ENCODE measurements at regions of chr2 and their contacts with region 1.

Region 1: GRCh38 chr2:209334198-209335017 is 89.4 kb upstream of the MAP2 start:
- DNase-seq: peak; percentile 84
- H3K4me3 Mint-ChIP-seq: no peak overlapping the region
- H3K27ac Mint-ChIP-seq: no peak overlapping the region
- H3K4me1 Mint-ChIP-seq: no peaks in the 10 kb centered on the region
- H3K27me3 Mint-ChIP-seq: no peaks in the 10 kb centered on the region
- CTCF ChIP-seq: peak; percentile 94

Region 2: GRCh38 chr2:208466151-208466919 is 868.1 kb before region 1 on chr2:
- CTCF ChIA-PET with region 1: interaction called, 4 read pairs
- POLR2A ChIA-PET with region 1: no interaction called
- intact Hi-C with region 1: loop called (anchors 1 kb)
- DNase-seq: peak; percentile 68
- H3K4me3 Mint-ChIP-seq: no peak overlapping the region
- H3K27ac Mint-ChIP-seq: no peak overlapping the region
- H3K4me1 Mint-ChIP-seq: no peaks in the 10 kb centered on the region
- H3K27me3 Mint-ChIP-seq: peaks cover 21% of the 10 kb centered on the region
- CTCF ChIP-seq: peak; percentile 75

Region 3: DNA sequence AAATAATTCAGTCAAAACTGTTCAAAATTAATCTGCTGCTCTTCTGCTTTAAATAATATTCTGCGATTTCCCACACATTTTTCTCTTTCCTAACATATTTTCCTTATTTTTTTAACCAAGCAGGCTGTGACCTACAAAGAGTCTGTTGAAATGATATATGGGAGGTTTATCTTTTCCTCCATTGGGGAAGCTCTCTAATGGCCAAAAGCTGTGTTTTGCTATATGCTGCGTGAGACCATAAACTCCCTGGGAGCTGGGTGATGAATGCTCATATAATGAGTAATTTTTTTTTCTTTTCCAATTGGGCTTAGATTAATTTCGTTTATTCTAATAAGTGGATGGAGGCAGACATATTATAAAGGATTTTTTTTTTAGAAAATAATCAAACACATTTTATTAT is 17.2 kb after region 1 on chr2:
- CTCF ChIA-PET with region 1: interaction called, 25 read pairs
- POLR2A ChIA-PET with region 1: no interaction called
- intact Hi-C with region 1: no loop called
- DNase-seq: no peak
- H3K4me3 Mint-ChIP-seq: no peak overlapping the region
- H3K27ac Mint-ChIP-seq: no peak overlapping the region
- H3K4me1 Mint-ChIP-seq: no peaks in the 10 kb centered on the region
- H3K27me3 Mint-ChIP-seq: no peaks in the 10 kb centered on the region
- CTCF ChIP-seq: no peak

Region 4: GRCh38 chr2:209391776-209392401 is 57.5 kb after region 1 on chr2:
- CTCF ChIA-PET with region 1: interaction called, 18 read pairs
- POLR2A ChIA-PET with region 1: no interaction called
- intact Hi-C with region 1: no loop called
- DNase-seq: peak; percentile 54
- H3K4me3 Mint-ChIP-seq: no peak overlapping the region
- H3K27ac Mint-ChIP-seq: peak overlapping the region; percentile 31
- H3K4me1 Mint-ChIP-seq: peaks cover 20% of the 10 kb centered on the region
- H3K27me3 Mint-ChIP-seq: no peaks in the 10 kb centered on the region
- CTCF ChIP-seq: no peak

Region 5: DNA sequence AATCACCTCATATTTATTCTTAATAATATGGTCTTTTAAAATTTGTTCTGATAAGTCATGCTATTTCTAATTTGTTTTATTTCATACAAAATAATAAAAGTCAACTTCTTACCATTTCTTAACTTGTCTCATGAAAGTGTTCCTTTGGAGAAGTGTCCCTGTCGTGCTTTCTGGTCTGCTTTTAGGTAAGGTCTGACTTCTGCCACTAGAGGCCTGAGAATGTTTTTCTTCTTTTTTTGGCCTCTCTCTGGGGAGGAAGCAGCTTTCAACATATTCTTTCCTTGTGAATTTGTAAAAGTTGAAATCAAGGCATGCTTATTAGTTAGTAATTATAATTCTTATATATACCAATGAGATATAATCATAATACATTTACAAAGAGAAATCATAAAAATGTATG is 128.8 kb after region 1 on chr2:
- CTCF ChIA-PET with region 1: no interaction called
- POLR2A ChIA-PET with region 1: no interaction called
- intact Hi-C with region 1: loop called (anchors 1 kb)
- DNase-seq: peak; percentile 10
- H3K4me3 Mint-ChIP-seq: no peak overlapping the region
- H3K27ac Mint-ChIP-seq: no peak overlapping the region
- H3K4me1 Mint-ChIP-seq: peaks cover 6% of the 10 kb centered on the region
- H3K27me3 Mint-ChIP-seq: no peaks in the 10 kb centered on the region
- CTCF ChIP-seq: no peak

Region 6: DNA sequence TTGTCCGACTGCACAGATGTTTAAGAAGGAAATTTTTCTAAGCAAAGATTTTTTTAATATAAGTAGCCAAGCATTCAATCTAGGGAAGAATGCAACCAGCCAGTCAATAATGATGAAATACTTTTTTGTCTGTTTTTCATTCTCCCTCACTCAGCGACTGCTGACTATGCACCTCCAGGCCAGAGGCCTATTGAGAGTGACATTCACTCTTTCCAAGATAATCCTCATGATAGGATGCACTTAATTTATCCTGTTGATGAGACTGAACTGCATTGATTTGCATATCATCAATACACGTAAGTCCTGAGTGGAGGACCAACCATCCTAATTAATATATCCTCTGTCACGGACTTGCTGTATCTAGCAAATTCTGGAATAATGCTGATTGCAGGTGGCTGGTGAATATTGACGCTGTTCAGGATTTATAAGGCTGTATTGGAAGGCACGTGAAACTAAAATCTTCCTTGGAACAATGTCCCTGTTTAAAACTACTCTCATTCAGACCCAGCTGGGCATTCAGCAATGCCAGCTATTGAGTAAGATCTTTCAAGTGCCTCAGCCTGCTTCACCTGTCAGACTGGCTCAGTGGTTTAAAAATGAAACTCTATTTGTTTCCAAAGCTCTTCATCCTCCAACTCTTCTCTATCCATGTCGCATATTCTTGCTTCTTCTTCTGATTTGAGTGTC is 231.6 kb after region 1 on chr2:
- CTCF ChIA-PET with region 1: interaction called, 18 read pairs
- POLR2A ChIA-PET with region 1: no interaction called
- intact Hi-C with region 1: no loop called
- DNase-seq: no peak
- H3K4me3 Mint-ChIP-seq: no peak overlapping the region
- H3K27ac Mint-ChIP-seq: no peak overlapping the region
- H3K4me1 Mint-ChIP-seq: no peaks in the 10 kb centered on the region
- H3K27me3 Mint-ChIP-seq: no peaks in the 10 kb centered on the region
- CTCF ChIP-seq: no peak

Region 7: GRCh38 chr2:210195101-210195852 is 860.9 kb after region 1 on chr2:
- CTCF ChIA-PET with region 1: interaction called, 10 read pairs
- POLR2A ChIA-PET with region 1: no interaction called
- intact Hi-C with region 1: loop called (anchors 10 kb)
- DNase-seq: peak; percentile 43
- H3K4me3 Mint-ChIP-seq: no peak overlapping the region
- H3K27ac Mint-ChIP-seq: no peak overlapping the region
- H3K4me1 Mint-ChIP-seq: peaks cover 6% of the 10 kb centered on the region
- H3K27me3 Mint-ChIP-seq: no peaks in the 10 kb centered on the region
- CTCF ChIP-seq: peak; percentile 53